Activated B cell treated with CpG ODN at 0.5 μM for 24 hours (primary cell): ENCODE measurements at regions of chrX and their contacts with region 1.

Region 1: GRCh38 chrX:30652527-30653414 is 452 bp upstream of the GK start:
- DNase-seq: peak; percentile 87
- ATAC-seq: peak; percentile 84
- H3K4me3 Mint-ChIP-seq: peak overlapping the region; percentile 90
- H3K27ac Mint-ChIP-seq: peak overlapping the region; percentile 96
- H3K4me1 Mint-ChIP-seq: peaks cover 49% of the 10 kb centered on the region
- H3K27me3 Mint-ChIP-seq: no peaks in the 10 kb centered on the region
- CTCF ChIP-seq: no peak

Region 2: GRCh38 chrX:30538271-30538670 is 114.5 kb before region 1 on chrX:
- CTCF ChIA-PET with region 1: no interaction called
- POLR2A ChIA-PET with region 1: no interaction called
- intact Hi-C with region 1: no loop called
- DNase-seq: no peak
- ATAC-seq: no peak
- H3K4me3 Mint-ChIP-seq: no peak overlapping the region
- H3K27ac Mint-ChIP-seq: no peak overlapping the region
- H3K4me1 Mint-ChIP-seq: peaks cover 9% of the 10 kb centered on the region
- H3K27me3 Mint-ChIP-seq: no peaks in the 10 kb centered on the region
- CTCF ChIP-seq: no peak

Region 3: GRCh38 chrX:30570505-30570904 is 82.3 kb before region 1 on chrX:
- CTCF ChIA-PET with region 1: no interaction called
- POLR2A ChIA-PET with region 1: interaction called, 6 read pairs
- intact Hi-C with region 1: loop called (anchors 1 kb)
- DNase-seq: no peak
- ATAC-seq: no peak
- H3K4me3 Mint-ChIP-seq: no peak overlapping the region
- H3K27ac Mint-ChIP-seq: no peak overlapping the region
- H3K4me1 Mint-ChIP-seq: peaks cover 57% of the 10 kb centered on the region
- H3K27me3 Mint-ChIP-seq: no peaks in the 10 kb centered on the region
- CTCF ChIP-seq: no peak

Region 4: GRCh38 chrX:30577362-30577991 is 75.3 kb before region 1 on chrX and contains the start of gene TASL:
- CTCF ChIA-PET with region 1: no interaction called
- POLR2A ChIA-PET with region 1: interaction called, 22 read pairs
- intact Hi-C with region 1: loop called (anchors 1 kb)
- DNase-seq: peak; percentile 17
- ATAC-seq: peak; percentile 84
- H3K4me3 Mint-ChIP-seq: peak within 1 kb of the TSS; percentile 93
- H3K27ac Mint-ChIP-seq: peak within 1 kb of the TSS; percentile 96
- H3K4me1 Mint-ChIP-seq: peaks cover 37% of the 10 kb centered on the region
- H3K27me3 Mint-ChIP-seq: no peaks in the 10 kb centered on the region
- CTCF ChIP-seq: no peak
- total RNA-seq, gene TASL: 27.0 and 27.7 TPM in 2 replicates

Region 5: DNA sequence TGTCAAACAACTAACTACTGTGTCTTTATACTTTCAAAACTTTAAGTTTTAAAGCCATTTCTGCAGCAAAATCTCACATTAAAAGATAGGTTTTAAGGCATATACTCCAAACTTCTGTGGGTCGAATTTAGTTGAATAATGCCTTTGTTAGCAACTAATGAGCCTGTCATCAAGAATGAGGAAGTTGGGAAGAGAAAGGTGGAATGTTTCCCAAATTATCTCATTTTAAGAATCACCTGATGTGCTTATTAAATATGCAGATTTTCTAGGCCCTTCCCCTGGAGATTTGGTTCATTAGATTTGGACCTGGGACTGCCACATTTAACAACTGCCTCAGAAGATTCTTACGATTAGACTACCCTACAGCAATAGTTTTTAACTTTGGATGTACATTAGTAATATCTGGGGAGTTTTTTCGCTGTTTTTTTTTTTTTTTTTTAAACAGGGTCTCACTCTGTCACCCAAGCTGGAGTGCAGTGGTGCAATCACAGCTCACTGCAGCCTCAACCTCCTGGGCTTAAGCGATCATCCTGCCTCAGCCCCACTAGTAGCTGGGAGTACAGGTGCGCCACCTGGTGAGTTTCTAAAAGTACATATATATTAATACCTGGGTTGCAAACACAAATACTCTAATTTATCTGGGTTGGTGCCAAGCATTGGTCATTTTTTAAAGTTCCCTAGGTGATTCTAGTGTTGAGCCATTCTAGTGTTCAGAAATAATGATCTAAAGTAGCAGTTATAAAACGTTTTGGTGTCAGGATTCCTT is 59.2 kb before region 1 on chrX:
- CTCF ChIA-PET with region 1: no interaction called
- POLR2A ChIA-PET with region 1: interaction called, 8 read pairs
- intact Hi-C with region 1: loop called (anchors 2 kb)
- DNase-seq: no peak
- ATAC-seq: peak; percentile 49
- H3K4me3 Mint-ChIP-seq: peak overlapping the region; percentile 36
- H3K27ac Mint-ChIP-seq: peak overlapping the region; percentile 84
- H3K4me1 Mint-ChIP-seq: peaks cover 70% of the 10 kb centered on the region
- H3K27me3 Mint-ChIP-seq: no peaks in the 10 kb centered on the region
- CTCF ChIP-seq: no peak

Region 6: DNA sequence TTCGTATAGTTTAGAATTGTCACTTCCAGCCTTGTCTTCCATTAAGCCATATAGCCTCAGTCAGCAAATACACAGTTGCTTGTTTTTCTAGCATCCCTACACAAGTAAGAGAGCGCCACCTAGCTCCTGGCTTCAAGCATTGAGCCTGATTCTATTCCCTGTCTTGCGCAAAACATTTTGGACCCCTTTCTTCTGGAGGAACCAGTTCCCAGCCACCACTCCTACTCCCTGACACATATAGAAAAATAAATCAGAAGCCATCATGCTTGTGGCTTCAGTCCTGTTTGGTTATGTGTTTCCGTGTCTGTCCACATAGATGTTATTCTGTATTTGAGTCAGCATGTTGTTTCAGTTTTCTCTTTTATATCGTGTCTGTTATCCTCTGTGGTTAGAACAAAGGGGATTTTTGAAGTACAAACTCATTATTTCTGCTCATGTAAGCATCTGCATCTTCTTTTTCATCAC is 60.3 kb after region 1 on chrX:
- CTCF ChIA-PET with region 1: no interaction called
- POLR2A ChIA-PET with region 1: no interaction called
- intact Hi-C with region 1: loop called (anchors 5 kb)
- DNase-seq: no peak
- ATAC-seq: peak; percentile 64
- H3K4me3 Mint-ChIP-seq: no peak overlapping the region
- H3K27ac Mint-ChIP-seq: peak overlapping the region; percentile 57
- H3K4me1 Mint-ChIP-seq: peaks cover 7% of the 10 kb centered on the region
- H3K27me3 Mint-ChIP-seq: no peaks in the 10 kb centered on the region
- CTCF ChIP-seq: no peak

Region 7: GRCh38 chrX:30822068-30822681 is 169.4 kb after region 1 on chrX:
- CTCF ChIA-PET with region 1: no interaction called
- POLR2A ChIA-PET with region 1: interaction called, 16 read pairs
- intact Hi-C with region 1: loop called (anchors 5 kb)
- DNase-seq: no peak
- ATAC-seq: peak; percentile 89
- H3K4me3 Mint-ChIP-seq: no peak overlapping the region
- H3K27ac Mint-ChIP-seq: peak overlapping the region; percentile 88
- H3K4me1 Mint-ChIP-seq: peaks cover 25% of the 10 kb centered on the region
- H3K27me3 Mint-ChIP-seq: no peaks in the 10 kb centered on the region
- CTCF ChIP-seq: no peak

Region 8: DNA sequence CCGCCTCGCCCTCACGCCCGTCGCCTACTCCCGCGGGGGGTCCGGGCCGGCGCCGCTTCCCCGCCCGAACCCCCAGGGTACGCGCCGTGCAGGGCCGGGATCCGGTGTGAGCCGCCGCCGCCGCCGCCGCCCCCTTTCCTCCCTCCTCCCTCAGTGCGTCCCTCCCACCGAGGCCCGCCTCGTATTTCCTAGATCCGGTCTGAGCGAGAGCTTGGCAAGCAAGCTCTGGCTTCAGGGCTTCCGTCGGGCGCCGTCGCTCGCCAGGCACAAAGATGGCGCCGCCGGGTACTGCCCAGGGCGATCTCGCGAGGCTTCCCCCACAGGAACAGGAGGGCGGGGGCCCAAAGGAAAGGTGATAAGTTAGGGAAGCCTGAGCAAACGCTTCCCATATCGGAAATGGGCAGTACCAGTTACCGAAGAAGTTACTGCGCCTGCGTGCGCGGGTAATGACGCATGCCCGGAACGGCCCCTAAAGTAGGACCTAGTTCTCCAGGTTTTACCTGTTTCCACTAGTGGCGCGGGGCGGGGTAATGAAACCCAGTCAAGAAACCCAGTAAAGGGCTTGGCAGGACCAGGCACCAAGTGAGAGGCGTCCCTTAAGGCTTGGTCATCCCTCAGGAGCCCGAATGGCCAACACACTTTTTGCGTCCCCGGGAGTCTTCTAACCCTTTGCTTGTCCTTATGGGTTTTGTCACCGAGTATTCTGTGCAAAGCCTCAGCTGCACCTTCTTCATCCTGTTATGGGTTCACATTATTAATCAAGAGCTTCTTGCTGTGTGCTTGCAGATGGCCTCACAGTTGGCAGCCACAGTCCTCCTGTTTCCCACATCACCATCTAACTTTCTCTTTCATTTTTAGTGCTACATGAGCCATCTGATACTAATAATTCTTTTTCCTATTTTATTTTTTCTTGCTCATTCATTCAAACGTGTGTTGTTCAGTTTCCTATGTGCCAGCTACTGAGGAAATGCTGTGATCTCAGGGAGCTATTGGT is 236.7 kb after region 1 on chrX and contains the start of gene TAB3:
- CTCF ChIA-PET with region 1: no interaction called
- POLR2A ChIA-PET with region 1: interaction called, 8 read pairs
- intact Hi-C with region 1: loop called (anchors 1 kb)
- DNase-seq: peak; percentile 80
- ATAC-seq: peak; percentile 92
- H3K4me3 Mint-ChIP-seq: peak within 1 kb of the TSS; percentile 91
- H3K27ac Mint-ChIP-seq: peak within 1 kb of the TSS; percentile 94
- H3K4me1 Mint-ChIP-seq: peaks cover 23% of the 10 kb centered on the region
- H3K27me3 Mint-ChIP-seq: no peaks in the 10 kb centered on the region
- CTCF ChIP-seq: no peak
- total RNA-seq, gene TAB3: 21.7 and 23.9 TPM in 2 replicates

Region 9: DNA sequence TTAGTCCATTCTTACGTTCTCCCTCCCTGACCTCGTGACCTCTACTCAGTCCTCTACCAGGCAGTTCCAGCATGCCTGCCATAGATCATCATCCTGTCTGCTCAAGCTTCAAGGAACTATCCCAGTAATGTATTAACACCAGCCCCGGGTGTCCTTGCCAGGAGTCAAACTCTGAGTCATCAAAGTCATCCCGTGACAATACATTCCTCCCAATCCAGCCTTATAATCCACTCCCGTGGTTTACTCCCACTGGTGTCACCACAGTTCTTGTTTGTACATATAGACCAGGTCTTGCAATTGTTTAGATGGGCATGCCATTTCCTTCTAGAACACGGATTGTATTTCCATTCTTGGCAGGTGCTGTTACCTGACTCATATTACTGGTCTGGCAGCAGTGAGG is 305.0 kb after region 1 on chrX:
- CTCF ChIA-PET with region 1: no interaction called
- POLR2A ChIA-PET with region 1: no interaction called
- intact Hi-C with region 1: no loop called
- DNase-seq: no peak
- ATAC-seq: no peak
- H3K4me3 Mint-ChIP-seq: no peak overlapping the region
- H3K27ac Mint-ChIP-seq: no peak overlapping the region
- H3K4me1 Mint-ChIP-seq: no peaks in the 10 kb centered on the region
- H3K27me3 Mint-ChIP-seq: no peaks in the 10 kb centered on the region
- CTCF ChIP-seq: no peak